ENCODE measurements at regions of chr18 and their contacts with region 1.

Region 1: DNA sequence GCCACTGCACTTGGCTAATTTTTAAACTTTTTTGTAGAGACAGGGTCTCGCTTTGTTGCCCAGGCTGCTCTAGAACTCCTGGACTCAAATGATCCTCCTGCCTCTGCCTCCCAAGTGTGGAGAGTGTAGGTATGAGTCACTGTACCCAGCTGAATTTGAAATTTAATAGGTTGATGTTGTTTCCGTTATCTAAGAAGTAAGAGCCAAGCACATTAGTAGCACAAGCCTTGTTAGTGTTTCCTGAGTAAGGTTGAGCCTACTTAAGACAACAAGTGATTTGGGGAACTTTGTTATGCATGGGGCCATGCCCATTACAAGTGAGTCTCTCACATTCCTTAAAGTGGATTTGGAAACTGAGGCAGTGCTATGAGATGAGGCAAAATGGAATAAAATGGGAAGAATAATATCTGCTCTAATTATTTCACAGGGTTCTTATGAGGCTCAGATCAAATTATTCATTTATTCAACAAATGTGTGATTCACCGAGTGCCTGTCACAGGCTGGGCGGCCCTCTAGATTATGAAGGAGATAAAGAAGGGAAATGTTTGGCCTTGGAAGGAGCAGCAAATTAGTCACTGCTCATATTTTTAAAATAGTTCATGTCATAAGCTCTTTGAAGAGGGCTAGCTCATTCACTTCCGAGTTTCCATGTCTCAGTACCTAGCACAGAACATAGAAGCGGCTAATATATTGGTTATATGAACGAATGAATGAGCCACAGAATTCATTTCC is 217.2 kb downstream of the LDLRAD4 start:
- DNase-seq: no peak
- ATAC-seq: peak; percentile 35 to 76 (median 64)
- H3K4me3 ChIP-seq: no peak overlapping the region
- H3K27ac ChIP-seq: peak overlapping the region in 8 of 12 donors; percentile 23 to 61 (median 41)
- H3K4me1 ChIP-seq: peaks cover 0 to 45% (median 25%) of the 10 kb centered on the region in 12 donors
- H3K27me3 ChIP-seq: no peaks in the 10 kb centered on the region
- CTCF ChIP-seq: no peak
- POLR2A ChIP-seq: no peak

Region 2: DNA sequence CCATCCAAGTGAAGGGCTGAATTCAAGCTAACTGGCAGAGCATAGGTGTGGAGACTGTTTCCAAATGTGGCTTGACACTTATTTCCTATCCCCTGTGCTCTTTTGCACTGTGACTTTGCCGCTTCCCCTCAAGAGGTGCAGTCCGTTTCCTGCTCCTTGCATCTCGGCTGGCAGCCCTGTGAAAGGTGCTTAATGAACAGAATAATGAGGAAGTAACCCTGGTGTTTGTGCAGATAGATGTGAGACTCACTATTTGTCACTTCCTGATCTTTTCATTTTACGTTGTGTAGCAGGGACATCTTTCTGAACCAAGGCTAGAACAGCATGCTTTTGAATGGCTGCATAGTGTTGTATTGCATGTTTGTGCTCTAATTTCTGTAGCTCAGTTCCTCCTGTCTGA is 383.8 kb before region 1 on chr18:
- intact Hi-C with region 1: no loop called
- DNase-seq: no peak
- ATAC-seq: no peak
- H3K4me3 ChIP-seq: no peak overlapping the region
- H3K27ac ChIP-seq: peak overlapping the region in 1 of 12 donors; percentile 11
- H3K4me1 ChIP-seq: peaks cover 0 to 22% (median 0%) of the 10 kb centered on the region in 12 donors
- H3K27me3 ChIP-seq: no peaks in the 10 kb centered on the region
- CTCF ChIP-seq: no peak
- POLR2A ChIP-seq: no peak

Region 3: DNA sequence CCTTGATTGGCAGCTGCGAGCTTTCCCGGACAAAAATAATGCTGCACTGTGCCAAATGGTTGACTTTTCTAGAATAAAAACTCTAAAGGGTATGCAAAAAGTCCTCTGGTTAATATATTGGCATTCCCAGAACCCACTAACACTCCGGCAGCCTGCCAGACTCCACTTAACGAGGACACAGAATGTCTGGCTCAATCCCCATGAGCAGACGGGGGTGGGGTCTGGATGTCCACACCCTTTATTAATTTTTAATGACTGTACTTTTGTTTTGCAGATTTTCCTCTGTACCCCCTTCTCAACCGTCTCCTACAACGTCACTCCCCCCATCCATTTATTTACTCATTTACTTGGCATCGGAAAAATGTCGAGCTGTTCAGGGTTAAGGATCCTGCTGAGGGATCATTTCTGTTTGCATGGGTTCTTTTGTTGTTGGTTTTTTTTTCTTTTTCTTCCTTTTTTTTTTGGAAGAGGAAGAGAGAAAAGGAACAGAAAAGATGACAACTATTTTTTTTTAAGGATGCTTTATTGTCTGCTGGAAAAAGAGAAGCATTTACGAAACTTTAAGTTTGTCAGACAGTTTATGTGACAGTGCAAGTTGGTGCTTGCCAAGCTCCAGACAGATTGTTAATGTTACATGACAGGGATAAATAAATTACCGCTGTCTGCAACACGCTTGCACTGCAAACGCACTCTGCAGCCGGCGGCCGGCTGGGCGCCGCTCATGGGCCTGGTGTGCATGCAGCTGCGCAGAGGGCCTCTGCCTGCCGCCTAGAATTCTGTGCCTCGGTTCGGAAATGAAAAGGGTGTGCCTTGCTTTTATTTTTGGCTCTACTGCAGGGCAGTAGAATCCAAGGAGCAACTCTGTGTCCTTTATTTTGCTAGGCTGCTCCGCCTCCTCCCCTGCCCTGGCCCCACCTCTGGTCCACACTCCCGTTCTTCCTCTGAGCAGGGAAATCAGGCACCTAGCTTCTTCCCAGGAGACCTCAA is 213.6 kb before region 1 on chr18:
- intact Hi-C with region 1: loop called in 3 of 10 experiments (anchors 5 to 10 kb)
- DNase-seq: peak; percentile 77 to 90 (median 84)
- ATAC-seq: peak; percentile 33 to 68 (median 59)
- H3K4me3 ChIP-seq: peak overlapping the region in 10 of 12 donors; percentile 15 to 38 (median 20)
- H3K27ac ChIP-seq: peak overlapping the region; percentile 70 to 95 (median 91)
- H3K4me1 ChIP-seq: peaks cover 14 to 69% (median 58%) of the 10 kb centered on the region in 12 donors
- H3K27me3 ChIP-seq: no peaks in the 10 kb centered on the region
- CTCF ChIP-seq: no peak
- POLR2A ChIP-seq: no peak

Region 4: GRCh38 chr18:13558124-13558523 is 122.4 kb after region 1 on chr18:
- intact Hi-C with region 1: no loop called
- DNase-seq: peak in 4 of 5 donors; percentile 45 to 72 (median 60)
- ATAC-seq: peak; percentile 73 to 84 (median 76)
- H3K4me3 ChIP-seq: no peak overlapping the region
- H3K27ac ChIP-seq: peak overlapping the region in 5 of 12 donors; percentile 23 to 59 (median 32)
- H3K4me1 ChIP-seq: peaks cover 3 to 68% (median 29%) of the 10 kb centered on the region in 12 donors
- H3K27me3 ChIP-seq: no peaks in the 10 kb centered on the region
- CTCF ChIP-seq: peak; percentile 48 to 75 (median 64)
- POLR2A ChIP-seq: no peak

Region 5: DNA sequence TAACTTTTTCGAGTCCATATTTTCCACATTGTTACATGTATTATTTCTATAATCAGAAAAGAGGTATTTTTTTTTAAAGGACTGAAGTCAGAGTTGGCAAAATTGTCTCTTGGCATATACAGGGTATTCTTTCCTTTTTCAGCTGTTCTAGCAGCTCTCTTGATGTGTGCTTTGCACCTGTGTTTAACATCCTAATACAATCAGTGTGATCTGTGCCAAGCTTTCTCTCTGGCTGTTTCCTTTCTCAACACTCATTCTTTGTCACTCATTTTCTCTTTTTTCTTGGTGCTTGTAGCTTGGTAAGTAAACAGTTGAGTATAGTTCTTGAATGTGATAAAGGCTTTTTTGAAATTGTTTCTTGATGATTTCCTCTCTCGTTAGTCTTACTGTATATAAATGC is 299.9 kb after region 1 on chr18:
- intact Hi-C with region 1: no loop called
- DNase-seq: no peak
- ATAC-seq: no peak
- H3K4me3 ChIP-seq: no peak overlapping the region
- H3K27ac ChIP-seq: no peak overlapping the region
- H3K4me1 ChIP-seq: peaks cover 0 to 8% (median under 1%) of the 10 kb centered on the region in 12 donors
- H3K27me3 ChIP-seq: no peaks in the 10 kb centered on the region
- CTCF ChIP-seq: no peak
- POLR2A ChIP-seq: no peak

Measured in heart left ventricle (tissue), 16 donors.